Activated CD4-positive, alpha-beta T cell treated with anti-CD3 and anti-CD28 coated beads for 36 hours (primary cell): ENCODE measurements at regions of chr11 and their contacts with region 1.

Region 1: GRCh38 chr11:48109046-48109666 is 107.5 kb upstream of the OR4B1 start:
- DNase-seq: no peak
- ATAC-seq: peak; percentile 34
- H3K4me3 Mint-ChIP-seq: peak overlapping the region; percentile 66
- H3K27ac Mint-ChIP-seq: peak overlapping the region; percentile 87
- H3K4me1 Mint-ChIP-seq: peaks cover 49% of the 10 kb centered on the region
- H3K27me3 Mint-ChIP-seq: no peaks in the 10 kb centered on the region

Region 2: GRCh38 chr11:47587723-47588326 is 521.3 kb before region 1 on chr11:
- CTCF ChIA-PET with region 1: no interaction called
- POLR2A ChIA-PET with region 1: no interaction called
- intact Hi-C with region 1: no loop called
- DNase-seq: no peak
- ATAC-seq: no peak
- H3K4me3 Mint-ChIP-seq: no peak overlapping the region
- H3K27ac Mint-ChIP-seq: no peak overlapping the region
- H3K4me1 Mint-ChIP-seq: no peaks in the 10 kb centered on the region
- H3K27me3 Mint-ChIP-seq: peaks cover 6% of the 10 kb centered on the region

Region 3: GRCh38 chr11:47642099-47642855 is 466.9 kb before region 1 on chr11 and contains the start of gene MTCH2:
- CTCF ChIA-PET with region 1: no interaction called
- POLR2A ChIA-PET with region 1: no interaction called
- intact Hi-C with region 1: loop called in 1 of 2 experiments (anchors 5 kb)
- DNase-seq: peak; percentile 98
- ATAC-seq: peak; percentile 94
- H3K4me3 Mint-ChIP-seq: peak within 1 kb of the TSS; percentile 99
- H3K27ac Mint-ChIP-seq: peak within 1 kb of the TSS; percentile 96
- H3K4me1 Mint-ChIP-seq: peaks cover 25% of the 10 kb centered on the region
- H3K27me3 Mint-ChIP-seq: no peaks in the 10 kb centered on the region
- total RNA-seq, gene MTCH2: 94.8 to 138 TPM

Region 4: GRCh38 chr11:47863189-47863892 is 245.8 kb before region 1 on chr11:
- CTCF ChIA-PET with region 1: interaction called, 5 read pairs
- POLR2A ChIA-PET with region 1: no interaction called
- intact Hi-C with region 1: loop called in 1 of 2 experiments (anchors 2 kb)
- DNase-seq: no peak
- ATAC-seq: peak; percentile 56
- H3K4me3 Mint-ChIP-seq: no peak overlapping the region
- H3K27ac Mint-ChIP-seq: no peak overlapping the region
- H3K4me1 Mint-ChIP-seq: peaks cover 39% of the 10 kb centered on the region
- H3K27me3 Mint-ChIP-seq: no peaks in the 10 kb centered on the region

Region 5: DNA sequence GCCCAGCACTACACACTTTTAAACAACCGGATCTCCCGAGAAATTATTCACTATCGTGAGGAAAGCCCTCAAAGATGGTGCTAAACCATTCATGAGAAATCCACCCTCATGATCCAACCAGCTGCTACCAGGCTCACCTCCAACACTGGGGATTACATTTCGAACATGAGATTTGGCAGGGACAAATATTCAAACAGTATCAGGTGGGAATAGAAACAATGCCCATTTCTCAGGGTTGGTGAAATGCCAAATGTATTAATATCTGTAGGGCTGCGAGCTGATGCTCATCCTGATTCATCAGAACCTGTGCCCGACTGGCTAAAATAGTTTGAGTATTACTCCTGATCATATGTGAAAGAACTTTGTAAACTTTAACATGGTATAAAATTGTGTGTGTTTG is 144.6 kb before region 1 on chr11:
- CTCF ChIA-PET with region 1: interaction called, 3 read pairs
- POLR2A ChIA-PET with region 1: no interaction called
- intact Hi-C with region 1: loop called in 1 of 2 experiments (anchors 1 kb)
- DNase-seq: no peak
- ATAC-seq: no peak
- H3K4me3 Mint-ChIP-seq: no peak overlapping the region
- H3K27ac Mint-ChIP-seq: no peak overlapping the region
- H3K4me1 Mint-ChIP-seq: no peaks in the 10 kb centered on the region
- H3K27me3 Mint-ChIP-seq: no peaks in the 10 kb centered on the region

Region 6: GRCh38 chr11:48020092-48020755 is 88.9 kb before region 1 on chr11:
- CTCF ChIA-PET with region 1: interaction called, 3 read pairs
- POLR2A ChIA-PET with region 1: interaction called, 3 read pairs
- intact Hi-C with region 1: loop called in 1 of 2 experiments (anchors 1 kb)
- DNase-seq: peak; percentile 59
- ATAC-seq: peak; percentile 59
- H3K4me3 Mint-ChIP-seq: peak overlapping the region; percentile 13
- H3K27ac Mint-ChIP-seq: peak overlapping the region; percentile 76
- H3K4me1 Mint-ChIP-seq: peaks cover 72% of the 10 kb centered on the region
- H3K27me3 Mint-ChIP-seq: no peaks in the 10 kb centered on the region

Region 7: GRCh38 chr11:48097041-48097476 is 12.1 kb before region 1 on chr11:
- CTCF ChIA-PET with region 1: interaction called, 16 read pairs
- POLR2A ChIA-PET with region 1: no interaction called
- intact Hi-C with region 1: loop called in 1 of 2 experiments (anchors 1 kb)
- DNase-seq: no peak
- ATAC-seq: peak; percentile 47
- H3K4me3 Mint-ChIP-seq: no peak overlapping the region
- H3K27ac Mint-ChIP-seq: peak overlapping the region; percentile 79
- H3K4me1 Mint-ChIP-seq: peaks cover 65% of the 10 kb centered on the region
- H3K27me3 Mint-ChIP-seq: no peaks in the 10 kb centered on the region